AG04450 (cell line): ENCODE measurements at regions of chr10 and their contacts with region 1.

Region 1: GRCh38 chr10:7525314-7526016 is 114.6 kb upstream of the SFMBT2 start:
- DNase-seq: peak; percentile 39
- H3K4me3 ChIP-seq: no peak overlapping the region
- H3K27ac ChIP-seq: no peak overlapping the region
- H3K27me3 ChIP-seq: no peaks in the 10 kb centered on the region
- CTCF ChIP-seq: peak; percentile 78

Region 2: DNA sequence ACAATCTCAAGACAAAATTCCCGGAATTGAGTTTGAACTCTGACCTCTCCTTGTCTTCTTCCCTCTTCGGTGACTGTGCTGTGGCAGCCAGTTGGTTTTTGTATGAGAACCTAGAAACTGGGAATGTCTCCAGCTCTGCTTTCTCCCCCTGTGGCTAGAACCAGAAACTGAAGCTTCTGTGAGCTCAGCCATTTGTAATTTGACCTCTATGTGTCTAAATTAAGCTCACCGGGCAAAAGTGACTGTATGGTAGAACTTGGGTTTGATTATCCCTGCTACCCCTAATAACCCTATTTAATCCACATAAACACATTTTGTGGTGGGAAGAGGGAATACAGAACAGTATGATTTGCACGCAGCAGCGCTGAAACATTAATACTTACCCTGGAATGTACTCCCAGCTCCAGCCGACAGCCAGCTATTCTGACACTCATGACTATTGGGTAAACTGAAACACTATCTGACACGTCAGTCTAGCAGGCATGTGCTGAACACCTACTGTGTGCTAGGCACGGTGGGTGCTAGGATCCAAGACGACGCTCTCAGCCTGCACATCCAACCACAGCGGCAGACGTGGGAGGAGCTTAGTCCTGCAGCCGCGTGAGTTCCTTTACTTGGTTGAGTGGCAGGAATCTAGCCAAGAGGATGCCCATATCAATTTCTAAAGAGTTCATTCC is 439.4 kb before region 1 on chr10:
- CTCF ChIA-PET with region 1: no interaction called
- POLR2A ChIA-PET with region 1: no interaction called
- DNase-seq: no peak
- H3K4me3 ChIP-seq: no peak overlapping the region
- H3K27ac ChIP-seq: no peak overlapping the region
- H3K27me3 ChIP-seq: no peaks in the 10 kb centered on the region
- CTCF ChIP-seq: peak; percentile 32

Region 3: GRCh38 chr10:7480742-7481367 is 44.6 kb before region 1 on chr10:
- CTCF ChIA-PET with region 1: no interaction called
- POLR2A ChIA-PET with region 1: no interaction called
- DNase-seq: no peak
- H3K4me3 ChIP-seq: no peak overlapping the region
- H3K27ac ChIP-seq: no peak overlapping the region
- H3K27me3 ChIP-seq: no peaks in the 10 kb centered on the region
- CTCF ChIP-seq: no peak

Region 4: DNA sequence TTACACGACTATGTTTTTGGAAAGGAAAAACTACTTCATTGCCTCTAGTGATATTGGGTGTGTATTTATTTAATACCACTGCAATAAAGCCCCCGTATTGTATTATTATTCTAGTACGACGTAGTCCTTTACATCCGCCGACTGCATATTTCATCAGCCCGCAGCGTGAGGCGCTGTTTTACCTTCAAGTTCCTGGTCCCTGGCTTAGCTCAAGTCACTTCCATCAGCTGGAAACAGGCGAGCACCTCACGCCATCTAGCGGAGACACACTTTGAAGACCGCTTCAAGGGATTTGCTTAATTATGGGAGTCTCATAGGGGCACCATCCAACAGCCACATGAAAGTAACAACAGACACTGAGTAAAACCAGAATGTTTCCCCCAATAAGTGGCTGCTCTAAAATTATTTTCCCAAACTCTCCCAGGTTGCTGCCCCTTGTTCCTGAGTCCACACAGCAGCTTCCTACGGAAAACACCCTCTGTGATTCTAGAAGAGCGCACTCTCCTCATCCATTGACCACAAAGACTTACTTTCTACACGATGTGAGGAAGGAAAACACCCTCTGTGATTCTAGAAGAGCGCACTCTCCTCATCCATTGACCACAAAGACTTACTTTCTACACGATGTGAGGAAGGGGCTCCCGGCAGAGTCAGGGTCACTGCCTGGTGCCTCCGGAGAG is 161.9 kb after region 1 on chr10:
- CTCF ChIA-PET with region 1: interaction called, 120 read pairs
- POLR2A ChIA-PET with region 1: no interaction called
- DNase-seq: peak; percentile 65
- H3K4me3 ChIP-seq: no peak overlapping the region
- H3K27ac ChIP-seq: no peak overlapping the region
- H3K27me3 ChIP-seq: no peaks in the 10 kb centered on the region
- CTCF ChIP-seq: peak; percentile 87

Region 5: DNA sequence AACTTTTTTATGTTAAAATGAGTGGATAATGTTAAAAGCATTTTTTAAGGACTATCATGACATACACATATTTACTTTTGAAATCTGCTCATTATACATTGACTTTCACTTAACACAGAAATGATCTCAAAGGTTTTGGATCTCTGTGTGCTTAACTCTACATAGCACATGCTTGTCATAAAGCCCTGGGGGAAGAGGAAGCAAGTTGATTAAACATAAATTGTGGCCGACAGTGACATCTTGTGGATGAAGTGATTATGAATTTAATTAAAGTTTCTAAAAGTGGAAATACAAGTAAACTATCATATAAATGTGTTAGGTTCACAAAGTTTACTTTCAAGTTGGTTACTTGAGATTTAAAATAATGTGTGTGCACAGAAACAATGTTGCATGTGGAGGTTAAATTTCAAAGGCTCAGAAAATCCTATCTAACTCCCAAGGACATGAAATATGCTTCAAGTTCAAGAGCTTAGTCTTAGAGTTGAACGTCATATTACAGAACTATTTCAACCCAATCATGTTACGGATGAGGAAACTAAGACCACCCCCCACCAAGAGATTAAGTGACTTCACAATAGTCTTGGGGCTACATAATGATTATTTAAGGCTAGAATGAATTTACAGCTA is 1776.8 kb after region 1 on chr10:
- CTCF ChIA-PET with region 1: interaction called, 24 read pairs
- POLR2A ChIA-PET with region 1: no interaction called
- DNase-seq: peak; percentile 21
- H3K4me3 ChIP-seq: no peak overlapping the region
- H3K27ac ChIP-seq: no peak overlapping the region
- H3K27me3 ChIP-seq: no peaks in the 10 kb centered on the region
- CTCF ChIP-seq: peak; percentile 41